ENCODE measurements at regions of chr2 and their contacts with region 1.

Region 1: GRCh38 chr2:55159037-55159651 is 72.9 kb downstream of the CLHC1 start:
- DNase-seq: peak; percentile 65 to 76
- ATAC-seq: peak; percentile 58 to 90 (median 74)
- H3K4me3 ChIP-seq: no peak overlapping the region
- H3K27ac ChIP-seq: peak overlapping the region in 8 of 10 donors; percentile 7 to 62 (median 26)
- H3K4me1 ChIP-seq: peaks cover 22 to 83% (median 50%) of the 10 kb centered on the region in 9 donors
- H3K27me3 ChIP-seq: no peaks in the 10 kb centered on the region
- CTCF ChIP-seq: no peak

Region 2: GRCh38 chr2:53568469-53568868 is 1590.7 kb before region 1 on chr2:
- intact Hi-C with region 1: no loop called
- DNase-seq: no peak
- ATAC-seq: no peak
- H3K4me3 ChIP-seq: no peak overlapping the region
- H3K27ac ChIP-seq: no peak overlapping the region
- H3K4me1 ChIP-seq: no peaks in the 10 kb centered on the region
- H3K27me3 ChIP-seq: no peaks in the 10 kb centered on the region
- CTCF ChIP-seq: no peak

Region 3: GRCh38 chr2:55111570-55112228 is 47.4 kb before region 1 on chr2:
- intact Hi-C with region 1: loop called in 2 of 10 experiments (anchors 5 kb)
- DNase-seq: peak; percentile 31 to 42
- ATAC-seq: peak; percentile 40 to 77 (median 64)
- H3K4me3 ChIP-seq: peak overlapping the region in 1 of 10 donors; percentile 25
- H3K27ac ChIP-seq: peak overlapping the region; percentile 59 to 94 (median 78)
- H3K4me1 ChIP-seq: peaks cover 11 to 52% (median 27%) of the 10 kb centered on the region in 9 donors
- H3K27me3 ChIP-seq: no peaks in the 10 kb centered on the region
- CTCF ChIP-seq: no peak

Region 4: GRCh38 chr2:55120634-55121359 is 38.3 kb before region 1 on chr2:
- intact Hi-C with region 1: loop called in 1 of 10 experiments (anchors 5 kb)
- DNase-seq: peak; percentile 55 to 56
- ATAC-seq: peak; percentile 68 to 92 (median 84)
- H3K4me3 ChIP-seq: no peak overlapping the region
- H3K27ac ChIP-seq: peak overlapping the region; percentile 0 to 78 (median 66)
- H3K4me1 ChIP-seq: peaks cover 7 to 43% (median 33%) of the 10 kb centered on the region in 9 donors
- H3K27me3 ChIP-seq: no peaks in the 10 kb centered on the region
- CTCF ChIP-seq: no peak

Region 5: DNA sequence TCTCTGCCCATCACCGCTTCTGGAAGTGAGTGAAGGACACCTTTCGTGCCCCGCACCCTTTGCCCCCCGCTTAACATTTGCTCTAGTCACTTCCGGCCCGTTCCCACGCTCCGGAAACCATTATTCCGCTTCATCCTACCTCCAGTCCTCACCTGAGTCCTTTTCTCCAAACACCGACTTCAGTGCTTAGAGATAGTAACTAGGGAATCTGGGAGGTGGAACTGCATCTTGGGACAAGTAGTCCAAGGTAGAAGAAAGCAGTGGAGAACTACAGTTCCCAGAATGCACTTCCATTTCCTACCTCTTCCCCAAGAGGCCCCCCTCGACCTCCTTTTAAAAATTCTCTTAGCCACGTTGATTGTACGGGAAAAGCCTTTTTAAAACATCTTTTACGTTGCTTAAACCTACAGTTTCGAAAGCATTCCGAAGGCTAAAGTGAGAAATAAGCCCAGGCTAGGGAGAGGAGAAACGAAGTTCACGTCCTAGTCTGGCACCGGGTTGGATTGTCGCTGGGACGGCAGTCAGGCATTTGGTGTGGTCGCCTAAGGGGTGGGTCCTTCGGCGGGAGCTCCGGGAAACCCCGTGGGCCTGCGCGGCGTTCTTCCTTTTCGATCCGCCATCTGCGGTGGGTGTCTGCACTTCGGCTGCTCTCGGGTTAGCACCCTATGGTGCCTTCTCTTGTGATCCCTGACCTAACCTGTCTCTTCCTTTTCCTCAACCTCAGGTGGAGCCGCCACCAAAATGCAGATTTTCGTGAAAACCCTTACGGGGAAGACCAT is 73.1 kb after region 1 on chr2 and contains the starts of genes CLHC1 and RPS27A:
- intact Hi-C with region 1: no loop called
- DNase-seq: peak; percentile 93 to 94
- ATAC-seq: peak; percentile 93 to 98 (median 96)
- H3K4me3 ChIP-seq: peak within 1 kb of the TSS; percentile 62 to 98 (median 88)
- H3K27ac ChIP-seq: peak within 1 kb of the TSS; percentile 80 to 98 (median 94)
- H3K4me1 ChIP-seq: peaks cover 0 to 49% (median 43%) of the 10 kb centered on the region in 9 donors
- H3K27me3 ChIP-seq: no peaks in the 10 kb centered on the region
- CTCF ChIP-seq: peak in 1 of 9 donors; percentile 2
- total RNA-seq, gene CLHC1: 4.0 to 9.0 (median 6.3) TPM
- total RNA-seq, gene RPS27A: 365 to 520 (median 408) TPM

Measured in heart right ventricle (tissue), 16 donors.